ENCODE measurements at regions of chr13 and their contacts with region 1.

Region 1: GRCh38 chr13:49563516-49563915 is 21.8 kb downstream of the RCBTB1 start:
- DNase-seq: no peak
- H3K4me3 ChIP-seq: no peak overlapping the region
- H3K27ac ChIP-seq: no peak overlapping the region
- H3K4me1 ChIP-seq: no peaks in the 10 kb centered on the region
- CTCF ChIP-seq: no peak

Region 2: DNA sequence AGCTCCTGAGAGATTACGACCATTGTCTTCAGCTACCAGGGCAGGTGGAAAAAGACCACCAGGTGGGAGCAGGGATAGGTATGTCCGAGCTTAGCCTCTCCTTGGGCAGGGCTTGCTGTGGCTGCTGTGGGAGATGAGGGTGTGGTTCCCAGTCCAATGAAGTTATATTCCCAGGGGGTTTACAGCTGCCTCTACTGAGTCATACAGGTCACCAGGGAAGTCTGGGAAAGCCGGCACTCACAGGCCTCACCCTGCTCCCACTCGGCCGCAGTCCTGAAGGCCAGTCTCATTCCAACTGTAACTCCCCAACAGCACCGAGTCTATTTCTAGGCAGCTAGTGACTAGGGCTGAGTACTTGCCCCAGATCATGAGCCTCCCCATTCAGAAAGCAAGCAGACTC is 510.7 kb before region 1 on chr13:
- CTCF ChIA-PET with region 1: no interaction called
- POLR2A ChIA-PET with region 1: no interaction called
- intact Hi-C with region 1: no loop called
- DNase-seq: no peak
- H3K4me3 ChIP-seq: no peak overlapping the region
- H3K27ac ChIP-seq: no peak overlapping the region
- H3K4me1 ChIP-seq: no peaks in the 10 kb centered on the region
- CTCF ChIP-seq: no peak

Region 3: GRCh38 chr13:49454388-49455006 is 109.0 kb before region 1 on chr13:
- CTCF ChIA-PET with region 1: no interaction called
- POLR2A ChIA-PET with region 1: no interaction called
- intact Hi-C with region 1: no loop called
- DNase-seq: no peak
- H3K4me3 ChIP-seq: no peak overlapping the region
- H3K27ac ChIP-seq: peak overlapping the region; percentile 42
- H3K4me1 ChIP-seq: peaks cover 33% of the 10 kb centered on the region
- CTCF ChIP-seq: no peak

Region 4: GRCh38 chr13:49585220-49586157 is 22.0 kb after region 1 on chr13 and contains the start of gene RCBTB1:
- CTCF ChIA-PET with region 1: no interaction called
- POLR2A ChIA-PET with region 1: interaction called, 4 read pairs
- intact Hi-C with region 1: loop called (anchors 2 kb)
- DNase-seq: peak; percentile 84
- H3K4me3 ChIP-seq: peak within 1 kb of the TSS; percentile 90
- H3K27ac ChIP-seq: peak within 1 kb of the TSS; percentile 71
- H3K4me1 ChIP-seq: peaks cover 31% of the 10 kb centered on the region
- CTCF ChIP-seq: no peak
- total RNA-seq, gene RCBTB1: 13.4 and 15.1 TPM in 2 replicates

Region 5: GRCh38 chr13:49939321-49939720 is 375.8 kb after region 1 on chr13:
- CTCF ChIA-PET with region 1: no interaction called
- POLR2A ChIA-PET with region 1: no interaction called
- intact Hi-C with region 1: no loop called
- DNase-seq: no peak
- H3K4me3 ChIP-seq: no peak overlapping the region
- H3K27ac ChIP-seq: peak overlapping the region; percentile 80
- H3K4me1 ChIP-seq: peaks cover 29% of the 10 kb centered on the region
- CTCF ChIP-seq: no peak

Region 6: DNA sequence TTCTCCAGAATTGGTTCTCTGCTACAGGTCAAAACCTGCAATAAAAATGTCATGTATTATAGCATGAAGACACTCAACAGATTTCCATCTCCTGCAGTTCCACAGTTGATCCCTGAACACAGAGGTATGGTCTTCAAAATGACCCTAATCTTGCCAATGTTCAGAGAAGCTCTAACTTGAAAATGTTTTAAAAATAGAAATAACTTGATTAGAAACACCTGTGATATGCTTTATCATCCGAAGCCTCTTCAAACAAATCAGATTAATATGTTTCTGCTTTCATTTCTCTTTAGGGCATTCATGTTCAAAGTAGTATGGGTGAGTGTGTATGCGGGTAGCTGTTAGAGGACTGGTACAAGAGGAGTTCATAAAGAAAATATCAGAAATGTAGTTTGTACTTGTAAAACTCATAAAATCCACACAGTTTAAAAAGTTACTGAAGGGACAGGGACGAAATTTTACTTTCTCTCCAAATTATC is 512.1 kb after region 1 on chr13:
- CTCF ChIA-PET with region 1: no interaction called
- POLR2A ChIA-PET with region 1: no interaction called
- intact Hi-C with region 1: no loop called
- DNase-seq: peak; percentile 62
- H3K4me3 ChIP-seq: peak overlapping the region; percentile 96
- H3K27ac ChIP-seq: peak overlapping the region; percentile 72
- H3K4me1 ChIP-seq: peaks cover 70% of the 10 kb centered on the region
- CTCF ChIP-seq: no peak